ENCODE measurements at regions of chrX and their contacts with region 1.

Region 1: GRCh38 chrX:106481341-106481740 is 130.4 kb upstream of the RADX start:
- DNase-seq: peak; percentile 54
- H3K4me3 Mint-ChIP-seq: no peak overlapping the region
- H3K27ac Mint-ChIP-seq: no peak overlapping the region
- H3K4me1 Mint-ChIP-seq: peaks cover 22% of the 10 kb centered on the region
- H3K27me3 Mint-ChIP-seq: no peaks in the 10 kb centered on the region

Region 2: GRCh38 chrX:104854188-104854587 is 1627.2 kb before region 1 on chrX:
- CTCF ChIA-PET with region 1: no interaction called
- intact Hi-C with region 1: loop called (anchors 10 kb)
- DNase-seq: no peak
- H3K4me3 Mint-ChIP-seq: no peak overlapping the region
- H3K27ac Mint-ChIP-seq: no peak overlapping the region
- H3K4me1 Mint-ChIP-seq: peaks cover 16% of the 10 kb centered on the region
- H3K27me3 Mint-ChIP-seq: peaks cover 11% of the 10 kb centered on the region

Region 3: GRCh38 chrX:104972743-104973142 is 1508.6 kb before region 1 on chrX:
- CTCF ChIA-PET with region 1: no interaction called
- intact Hi-C with region 1: no loop called
- DNase-seq: no peak
- H3K4me3 Mint-ChIP-seq: no peak overlapping the region
- H3K27ac Mint-ChIP-seq: no peak overlapping the region
- H3K4me1 Mint-ChIP-seq: no peaks in the 10 kb centered on the region
- H3K27me3 Mint-ChIP-seq: no peaks in the 10 kb centered on the region

Region 4: DNA sequence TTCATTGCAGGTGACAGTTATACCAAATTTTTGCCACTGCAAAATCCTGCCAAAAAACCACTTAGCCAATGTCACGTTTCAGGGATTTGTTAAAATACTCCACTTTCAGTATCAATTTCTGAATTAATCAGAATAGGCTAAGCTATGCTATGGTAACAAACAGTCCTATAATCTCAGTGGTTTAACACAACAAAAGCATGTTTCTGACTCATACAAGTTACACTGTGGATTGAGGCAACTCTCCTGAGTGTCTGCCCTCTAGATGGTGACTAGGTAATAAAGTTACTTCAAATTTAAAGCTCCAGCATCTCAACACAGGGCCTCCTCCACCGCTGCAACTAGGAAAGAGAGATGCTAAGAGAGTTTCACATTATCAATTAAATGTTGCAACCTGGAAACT is 107.5 kb after region 1 on chrX:
- CTCF ChIA-PET with region 1: interaction called, 4 read pairs
- intact Hi-C with region 1: loop called (anchors 1 kb)
- DNase-seq: no peak
- H3K4me3 Mint-ChIP-seq: no peak overlapping the region
- H3K27ac Mint-ChIP-seq: no peak overlapping the region
- H3K4me1 Mint-ChIP-seq: peaks cover 7% of the 10 kb centered on the region
- H3K27me3 Mint-ChIP-seq: no peaks in the 10 kb centered on the region

Region 5: GRCh38 chrX:106791495-106791894 is 310.2 kb after region 1 on chrX:
- CTCF ChIA-PET with region 1: interaction called, 5 read pairs
- intact Hi-C with region 1: loop called (anchors 1 kb)
- DNase-seq: no peak
- H3K4me3 Mint-ChIP-seq: no peak overlapping the region
- H3K27ac Mint-ChIP-seq: no peak overlapping the region
- H3K4me1 Mint-ChIP-seq: no peaks in the 10 kb centered on the region
- H3K27me3 Mint-ChIP-seq: no peaks in the 10 kb centered on the region

Region 6: GRCh38 chrX:106999002-106999975 is 517.9 kb after region 1 on chrX:
- CTCF ChIA-PET with region 1: no interaction called
- intact Hi-C with region 1: loop called (anchors 10 kb)
- DNase-seq: peak; percentile 63
- H3K4me3 Mint-ChIP-seq: peak overlapping the region; percentile 72
- H3K27ac Mint-ChIP-seq: no peak overlapping the region
- H3K4me1 Mint-ChIP-seq: peaks cover 8% of the 10 kb centered on the region
- H3K27me3 Mint-ChIP-seq: no peaks in the 10 kb centered on the region

Region 7: DNA sequence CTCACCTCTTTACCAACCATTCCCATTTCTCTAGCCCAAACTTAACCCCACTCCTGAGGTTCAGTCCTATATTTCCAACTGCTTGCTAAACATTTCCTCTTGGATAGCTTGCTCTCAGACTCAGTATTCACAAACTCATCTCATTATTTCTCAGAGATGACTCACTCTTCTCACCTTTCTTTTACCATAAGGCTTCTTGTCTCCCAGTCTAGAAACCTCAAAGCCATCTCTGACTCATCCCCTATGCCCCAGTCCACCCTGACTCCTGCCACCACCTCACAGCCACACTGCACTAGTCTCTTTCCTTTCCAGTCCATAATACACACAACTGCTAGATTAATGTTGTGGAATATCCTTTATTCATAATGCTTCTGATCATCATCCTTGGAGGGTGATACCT is 973.0 kb after region 1 on chrX:
- CTCF ChIA-PET with region 1: no interaction called
- intact Hi-C with region 1: loop called (anchors 10 kb)
- DNase-seq: peak; percentile 59
- H3K4me3 Mint-ChIP-seq: no peak overlapping the region
- H3K27ac Mint-ChIP-seq: no peak overlapping the region
- H3K4me1 Mint-ChIP-seq: peaks cover 14% of the 10 kb centered on the region
- H3K27me3 Mint-ChIP-seq: peaks cover 32% of the 10 kb centered on the region